Endothelial cell of umbilical vein (primary cell): ENCODE measurements at regions of chr18 and their contacts with region 1.

Region 1: GRCh38 chr18:59697236-59697932 is at the start of gene CCBE1:
- DNase-seq: peak; percentile 34
- H3K4me3 ChIP-seq: peak within 1 kb of the TSS in 1 of 3 experiments; percentile 8
- H3K27ac ChIP-seq: no peak within 1 kb of the TSS
- H3K4me1 ChIP-seq: peaks cover 2% of the 10 kb centered on the region
- H3K27me3 ChIP-seq: peaks cover 29 to 35% of the 10 kb centered on the region in 2 experiments
- CTCF ChIP-seq: peak; percentile 72 to 91
- POLR2A ChIP-seq: no peak
- total RNA-seq, gene CCBE1: not detected in 2 replicates

Region 2: DNA sequence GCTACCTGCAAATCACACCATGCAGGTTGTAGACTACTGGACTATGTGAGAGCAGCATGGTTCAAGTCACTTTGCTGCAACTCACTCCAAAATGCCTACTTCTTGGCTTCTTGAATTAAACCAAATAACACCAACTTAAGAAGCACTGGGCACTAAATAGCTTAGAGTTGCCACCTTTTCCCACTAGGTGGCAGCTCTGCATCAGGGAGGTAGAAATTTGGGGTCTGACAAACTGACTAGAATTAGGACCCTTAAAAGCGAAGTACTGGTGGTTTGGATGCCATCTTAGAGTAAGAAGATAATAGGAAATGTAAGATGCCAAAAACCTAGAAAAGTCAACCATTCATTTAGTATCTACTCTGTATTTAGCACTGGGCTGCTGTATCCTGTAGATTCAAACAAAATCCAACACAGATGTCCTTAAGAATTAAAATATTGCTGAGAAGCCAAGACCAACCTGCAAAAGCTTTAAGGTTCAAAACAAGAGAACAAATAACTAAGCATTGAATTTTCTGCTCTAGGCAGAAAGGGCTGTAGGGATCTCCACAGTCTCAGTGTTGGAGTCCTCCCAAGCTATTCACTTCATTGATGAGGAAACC is 65.7 kb before region 1 on chr18:
- CTCF ChIA-PET with region 1: interaction called, 129 read pairs
- POLR2A ChIA-PET with region 1: no interaction called
- dilution Hi-C with region 1: no loop called
- intact Hi-C with region 1: no loop called
- DNase-seq: peak; percentile 21
- H3K4me3 ChIP-seq: no peak overlapping the region
- H3K27ac ChIP-seq: no peak overlapping the region
- H3K4me1 ChIP-seq: no peaks in the 10 kb centered on the region
- H3K27me3 ChIP-seq: peaks cover 0 to under 1% of the 10 kb centered on the region in 2 experiments
- CTCF ChIP-seq: peak; percentile 30 to 38
- POLR2A ChIP-seq: no peak

Region 3: DNA sequence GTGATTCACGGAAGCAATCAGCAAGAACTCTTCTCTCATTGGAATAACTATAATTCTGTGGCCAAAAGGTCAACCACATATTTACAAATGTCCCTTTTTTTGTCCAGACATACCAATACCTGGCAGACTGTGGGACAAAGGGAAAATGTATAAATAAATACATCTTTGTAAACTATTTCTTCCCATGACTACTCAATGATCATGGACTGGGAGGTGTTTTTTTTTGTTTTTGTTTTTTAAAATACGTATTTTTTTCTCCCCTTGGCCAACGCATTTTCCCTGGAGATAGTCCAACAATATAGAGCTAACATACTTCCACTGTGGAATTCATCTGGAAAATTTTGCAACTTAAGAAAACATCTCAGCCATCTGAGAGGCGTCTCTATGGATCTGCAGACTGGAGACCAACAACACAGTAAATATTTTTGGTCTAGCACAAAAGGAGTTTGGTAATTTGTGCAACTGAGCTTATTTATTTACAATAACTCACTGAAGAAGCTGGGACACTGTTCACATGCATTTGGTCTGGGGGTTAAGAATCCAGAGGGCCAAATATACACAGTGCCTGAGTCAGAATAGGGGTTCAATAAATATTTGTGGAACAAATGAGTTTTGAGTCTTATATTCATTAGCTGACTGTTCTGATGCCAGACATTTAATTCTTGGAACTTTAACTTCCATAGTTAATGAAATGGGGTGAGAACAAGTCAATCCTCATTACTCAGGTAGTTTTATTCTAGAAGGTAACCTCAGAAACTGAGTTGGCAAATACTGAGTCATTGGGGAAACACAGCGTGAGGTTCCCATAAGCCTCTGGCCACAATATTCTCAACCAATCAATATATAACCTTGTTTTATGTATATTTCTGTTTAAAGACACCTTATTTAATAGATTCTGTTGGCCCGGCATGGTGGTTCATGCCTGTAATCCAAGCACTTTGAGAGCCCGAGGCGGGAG is 36.3 kb before region 1 on chr18:
- CTCF ChIA-PET with region 1: interaction called, 17 read pairs
- POLR2A ChIA-PET with region 1: no interaction called
- dilution Hi-C with region 1: no loop called
- intact Hi-C with region 1: no loop called
- DNase-seq: no peak
- H3K4me3 ChIP-seq: no peak overlapping the region
- H3K27ac ChIP-seq: no peak overlapping the region
- H3K4me1 ChIP-seq: no peaks in the 10 kb centered on the region
- H3K27me3 ChIP-seq: no peaks in the 10 kb centered on the region
- CTCF ChIP-seq: no peak
- POLR2A ChIP-seq: no peak

Region 4: DNA sequence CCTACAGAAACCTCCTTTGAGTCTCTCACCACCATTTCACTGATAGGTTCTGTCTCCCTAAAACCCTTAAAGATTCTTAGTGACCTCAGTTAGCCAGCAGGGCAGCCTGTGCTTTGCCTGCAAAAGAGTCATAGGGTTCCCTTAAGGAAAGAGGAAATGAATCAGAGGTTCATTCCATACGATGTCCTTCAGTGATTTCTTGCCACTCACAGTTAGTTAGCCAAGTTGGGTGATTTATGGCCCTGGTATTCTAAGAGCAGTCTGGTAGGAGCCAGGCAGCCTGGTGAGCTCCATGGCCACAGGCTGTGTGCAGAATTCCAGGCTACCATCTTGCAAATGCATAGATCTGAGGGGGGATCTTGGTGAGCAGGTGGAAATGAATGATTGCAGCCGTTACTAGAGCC is 18.6 kb after region 1 on chr18:
- CTCF ChIA-PET with region 1: interaction called, 129 read pairs
- POLR2A ChIA-PET with region 1: interaction called, 3 read pairs
- dilution Hi-C with region 1: no loop called
- intact Hi-C with region 1: no loop called
- DNase-seq: peak; percentile 77
- H3K4me3 ChIP-seq: no peak overlapping the region
- H3K27ac ChIP-seq: no peak overlapping the region
- H3K4me1 ChIP-seq: no peaks in the 10 kb centered on the region
- H3K27me3 ChIP-seq: no peaks in the 10 kb centered on the region
- CTCF ChIP-seq: no peak
- POLR2A ChIP-seq: no peak

Region 5: GRCh38 chr18:59752666-59753065 is 55.3 kb after region 1 on chr18:
- CTCF ChIA-PET with region 1: interaction called, 14 read pairs
- POLR2A ChIA-PET with region 1: no interaction called
- dilution Hi-C with region 1: no loop called
- intact Hi-C with region 1: no loop called
- DNase-seq: no peak
- H3K4me3 ChIP-seq: no peak overlapping the region
- H3K27ac ChIP-seq: no peak overlapping the region
- H3K4me1 ChIP-seq: no peaks in the 10 kb centered on the region
- H3K27me3 ChIP-seq: no peaks in the 10 kb centered on the region
- CTCF ChIP-seq: no peak
- POLR2A ChIP-seq: no peak

Region 6: DNA sequence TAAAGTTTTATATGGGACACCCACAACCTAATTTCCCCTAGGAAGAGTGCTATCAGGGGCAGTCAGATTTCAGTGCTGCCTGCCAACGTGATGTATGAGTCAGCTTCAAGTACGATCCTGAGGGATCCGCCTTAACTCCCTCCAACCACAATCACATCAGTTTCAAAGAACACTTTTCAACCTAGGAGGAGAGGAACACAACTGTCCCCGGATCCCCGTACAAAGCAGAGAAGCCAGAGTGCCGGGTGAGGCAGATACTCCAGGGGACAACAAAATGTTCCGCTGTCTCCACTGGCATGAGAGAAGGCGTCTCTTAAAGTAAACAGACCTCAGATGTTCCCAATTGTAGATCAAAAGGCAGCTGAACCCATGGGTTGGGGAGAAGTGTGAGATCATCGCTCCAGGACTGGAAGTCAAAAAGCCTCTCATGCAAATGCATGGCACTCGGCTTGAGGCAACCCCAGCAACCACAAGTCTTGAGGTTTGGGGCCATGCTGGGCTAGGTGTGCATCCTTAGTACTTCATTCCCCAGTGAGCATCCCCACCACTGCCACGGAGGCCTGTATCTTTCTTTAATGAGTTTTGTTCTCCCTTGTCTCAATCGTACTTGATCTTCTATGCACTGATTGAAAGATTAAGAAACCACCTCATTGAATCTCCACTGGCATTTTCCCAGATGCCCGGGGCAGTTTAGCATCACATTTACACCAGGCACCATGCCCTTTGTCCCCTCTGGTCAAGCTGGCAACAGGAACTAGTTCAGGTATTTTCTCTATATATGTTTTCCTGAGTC is 90.8 kb after region 1 on chr18:
- CTCF ChIA-PET with region 1: interaction called, 93 read pairs
- POLR2A ChIA-PET with region 1: no interaction called
- dilution Hi-C with region 1: no loop called
- intact Hi-C with region 1: no loop called
- DNase-seq: no peak
- H3K4me3 ChIP-seq: no peak overlapping the region
- H3K27ac ChIP-seq: no peak overlapping the region
- H3K4me1 ChIP-seq: no peaks in the 10 kb centered on the region
- H3K27me3 ChIP-seq: no peaks in the 10 kb centered on the region
- CTCF ChIP-seq: no peak
- POLR2A ChIP-seq: no peak